Caco-2 (cell line): ENCODE measurements at regions of chr18 and their contacts with region 1.

Region 1: GRCh38 chr18:53864770-53865169 is 359.7 kb downstream of the MBD2 start:
- DNase-seq: no peak
- H3K4me3 ChIP-seq: no peak overlapping the region
- H3K4me3 Mint-ChIP-seq: no peak overlapping the region
- H3K27ac Mint-ChIP-seq: no peak overlapping the region
- H3K4me1 ChIP-seq: no peaks in the 10 kb centered on the region
- H3K4me1 Mint-ChIP-seq: no peaks in the 10 kb centered on the region
- H3K27me3 ChIP-seq: no peaks in the 10 kb centered on the region
- H3K27me3 Mint-ChIP-seq: peaks cover 4% of the 10 kb centered on the region
- CTCF ChIP-seq: no peak

Region 2: GRCh38 chr18:53567929-53568574 is 296.7 kb before region 1 on chr18:
- CTCF ChIA-PET with region 1: no interaction called
- POLR2A ChIA-PET with region 1: no interaction called
- intact Hi-C with region 1: loop called (anchors 10 kb)
- DNase-seq: no peak
- H3K4me3 ChIP-seq: no peak overlapping the region
- H3K4me3 Mint-ChIP-seq: no peak overlapping the region
- H3K27ac Mint-ChIP-seq: no peak overlapping the region
- H3K4me1 ChIP-seq: no peaks in the 10 kb centered on the region
- H3K4me1 Mint-ChIP-seq: no peaks in the 10 kb centered on the region
- H3K27me3 ChIP-seq: no peaks in the 10 kb centered on the region
- H3K27me3 Mint-ChIP-seq: peaks cover 6% of the 10 kb centered on the region
- CTCF ChIP-seq: peak; percentile 16 to 37

Region 3: GRCh38 chr18:53817976-53818950 is 46.5 kb before region 1 on chr18:
- CTCF ChIA-PET with region 1: no interaction called
- POLR2A ChIA-PET with region 1: no interaction called
- intact Hi-C with region 1: no loop called
- DNase-seq: no peak
- H3K4me3 ChIP-seq: no peak overlapping the region
- H3K4me3 Mint-ChIP-seq: no peak overlapping the region
- H3K27ac Mint-ChIP-seq: no peak overlapping the region
- H3K4me1 ChIP-seq: no peaks in the 10 kb centered on the region
- H3K4me1 Mint-ChIP-seq: no peaks in the 10 kb centered on the region
- H3K27me3 ChIP-seq: no peaks in the 10 kb centered on the region
- H3K27me3 Mint-ChIP-seq: peaks cover 3% of the 10 kb centered on the region
- CTCF ChIP-seq: no peak